ENCODE measurements at regions of chr9 and their contacts with region 1.

Region 1: DNA sequence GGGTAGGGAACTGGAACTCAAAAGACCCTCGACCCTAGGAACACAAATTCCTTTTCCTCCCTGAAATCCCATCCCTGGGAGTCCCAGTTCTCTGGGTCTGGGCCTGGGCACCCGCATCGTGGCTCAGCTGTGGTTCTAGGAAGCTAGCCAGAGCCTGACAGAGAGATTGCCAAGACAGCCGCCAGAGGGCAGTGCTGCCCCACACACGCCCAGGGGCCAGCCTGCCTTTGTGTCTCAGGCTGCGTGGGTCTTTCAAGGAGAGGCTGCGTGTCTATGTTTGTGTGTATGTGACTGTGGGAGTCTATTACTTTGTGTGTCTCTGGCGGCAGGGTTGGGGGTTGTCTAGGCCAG is 32.0 kb upstream of the TTLL11 start:
- DNase-seq: peak; percentile 47
- H3K4me3 ChIP-seq: no peak overlapping the region
- H3K27ac ChIP-seq: no peak overlapping the region
- H3K27me3 ChIP-seq: peaks cover 2% of the 10 kb centered on the region
- CTCF ChIP-seq: peak; percentile 97

Region 2: DNA sequence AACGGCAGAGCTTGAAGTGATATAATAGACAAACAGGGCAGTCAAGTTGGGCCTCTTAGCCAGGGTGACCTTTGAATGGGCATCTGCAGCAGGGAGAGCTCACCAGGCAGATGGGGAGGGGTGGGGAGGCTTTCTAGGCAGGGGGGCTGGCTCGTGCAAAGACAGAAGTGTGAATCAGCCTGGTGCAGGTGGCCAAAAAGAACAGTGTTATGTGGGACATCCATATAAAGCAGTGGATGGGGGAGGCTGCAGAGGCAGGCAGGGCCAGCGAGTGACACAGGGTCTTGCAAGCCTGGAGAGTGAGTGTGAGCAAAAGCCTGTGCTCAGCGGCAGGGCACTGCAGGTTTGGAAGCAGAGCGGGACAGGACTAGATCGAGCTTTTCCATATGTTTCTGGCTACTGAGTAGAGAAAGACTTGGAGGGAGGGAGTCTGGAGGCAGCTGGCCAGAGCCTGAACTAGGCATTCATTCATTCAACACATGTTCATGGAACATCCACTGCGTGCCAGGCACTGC is 17.8 kb before region 1 on chr9:
- CTCF ChIA-PET with region 1: interaction called, 62 read pairs
- POLR2A ChIA-PET with region 1: interaction called, 3 read pairs
- DNase-seq: no peak
- H3K4me3 ChIP-seq: no peak overlapping the region
- H3K27ac ChIP-seq: no peak overlapping the region
- H3K27me3 ChIP-seq: peaks cover 3% of the 10 kb centered on the region
- CTCF ChIP-seq: no peak

Region 3: DNA sequence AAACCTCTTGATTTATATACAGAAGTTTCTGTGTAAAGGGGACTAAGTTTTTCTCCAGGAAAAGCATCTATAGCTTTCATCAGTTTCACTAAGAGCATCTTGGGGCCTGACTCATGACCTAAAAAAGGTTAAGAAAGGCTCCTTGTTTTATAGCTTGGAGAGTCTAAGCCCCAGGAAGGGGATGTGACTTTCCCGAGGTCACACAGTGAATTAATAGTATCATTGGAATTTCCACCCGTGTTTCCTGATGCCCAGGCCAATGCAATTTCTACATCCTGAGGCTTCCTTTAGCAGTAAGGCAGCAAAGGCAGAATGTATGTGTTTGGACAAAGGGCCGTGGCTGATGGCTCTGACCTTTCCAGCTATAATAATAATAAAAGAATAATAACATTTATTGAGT is 43.2 kb after region 1 on chr9:
- CTCF ChIA-PET with region 1: no interaction called
- POLR2A ChIA-PET with region 1: no interaction called
- DNase-seq: no peak
- H3K4me3 ChIP-seq: no peak overlapping the region
- H3K27ac ChIP-seq: no peak overlapping the region
- H3K27me3 ChIP-seq: peaks cover 45% of the 10 kb centered on the region
- CTCF ChIP-seq: no peak

Region 4: DNA sequence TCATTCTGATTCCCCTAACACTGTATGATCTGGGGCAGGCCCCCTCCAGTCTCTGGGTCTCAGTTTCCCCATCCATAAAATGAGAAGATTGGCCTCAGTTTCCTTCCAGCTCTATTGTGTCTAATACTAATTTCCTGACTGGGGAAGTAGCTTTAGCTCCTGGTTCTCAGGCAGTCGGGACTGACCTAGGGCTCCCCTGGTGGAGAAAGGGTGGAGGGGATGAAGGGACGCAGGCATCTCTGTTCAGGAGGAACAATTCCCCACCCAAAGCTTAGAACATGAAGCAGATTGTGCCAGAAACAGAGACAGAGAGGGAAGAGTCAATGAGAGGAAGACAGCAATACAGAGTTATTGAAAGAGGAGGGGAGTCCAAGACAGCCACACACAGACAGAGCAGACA is 231.5 kb after region 1 on chr9:
- CTCF ChIA-PET with region 1: interaction called, 222 read pairs
- POLR2A ChIA-PET with region 1: no interaction called
- DNase-seq: no peak
- H3K4me3 ChIP-seq: no peak overlapping the region
- H3K27ac ChIP-seq: no peak overlapping the region
- H3K27me3 ChIP-seq: no peaks in the 10 kb centered on the region
- CTCF ChIP-seq: peak; percentile 66

Region 5: DNA sequence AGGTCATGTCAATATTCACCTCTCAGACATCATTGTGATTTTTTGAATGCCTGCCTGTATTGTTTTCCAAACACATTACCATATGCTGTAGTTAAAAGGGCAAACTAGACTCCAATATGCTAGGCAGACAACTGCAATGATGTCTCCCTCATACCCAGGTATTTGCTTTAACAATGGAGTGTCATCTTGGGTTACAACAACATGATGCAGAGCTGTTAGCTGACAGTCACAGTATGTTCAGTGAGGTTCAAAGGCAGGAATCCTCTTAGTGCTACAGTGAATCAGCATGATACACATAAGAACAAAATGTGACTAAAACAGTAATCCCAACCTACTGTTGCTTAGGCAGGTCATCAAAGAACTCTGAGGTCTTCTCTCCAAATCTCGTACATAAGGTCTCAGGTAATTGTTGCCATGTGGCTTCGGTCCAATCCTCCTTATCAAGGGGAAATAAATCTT is 328.6 kb after region 1 on chr9:
- CTCF ChIA-PET with region 1: interaction called, 36 read pairs
- POLR2A ChIA-PET with region 1: no interaction called
- DNase-seq: no peak
- H3K4me3 ChIP-seq: no peak overlapping the region
- H3K27ac ChIP-seq: no peak overlapping the region
- H3K27me3 ChIP-seq: no peaks in the 10 kb centered on the region
- CTCF ChIP-seq: no peak

Region 6: GRCh38 chr9:122464633-122465567 is 339.8 kb after region 1 on chr9:
- CTCF ChIA-PET with region 1: interaction called, 13 read pairs
- POLR2A ChIA-PET with region 1: no interaction called
- DNase-seq: peak; percentile 74
- H3K4me3 ChIP-seq: peak overlapping the region; percentile 55
- H3K27ac ChIP-seq: no peak overlapping the region
- H3K27me3 ChIP-seq: no peaks in the 10 kb centered on the region
- CTCF ChIP-seq: peak; percentile 88

Measured in AG04450 (cell line).